PC-3 (cell line): ENCODE measurements at regions of chr5 and their contacts with region 1.

Region 1: GRCh38 chr5:58460732-58461286 is 923 bp upstream of the PLK2 start:
- DNase-seq: peak; percentile 88
- ATAC-seq: peak; percentile 67
- H3K4me3 ChIP-seq: peak overlapping the region; percentile 99
- H3K27ac ChIP-seq: peak overlapping the region; percentile 84
- H3K4me1 ChIP-seq: peaks cover 32% of the 10 kb centered on the region
- H3K27me3 ChIP-seq: no peaks in the 10 kb centered on the region
- CTCF ChIP-seq: peak; percentile 70

Region 2: GRCh38 chr5:57435701-57436134 is 1025.1 kb before region 1 on chr5:
- CTCF ChIA-PET with region 1: no interaction called
- POLR2A ChIA-PET with region 1: no interaction called
- intact Hi-C with region 1: loop called (anchors 2 kb)
- DNase-seq: peak; percentile 93
- ATAC-seq: peak; percentile 92
- H3K4me3 ChIP-seq: no peak overlapping the region
- H3K27ac ChIP-seq: peak overlapping the region; percentile 99
- H3K4me1 ChIP-seq: peaks cover 47% of the 10 kb centered on the region
- H3K27me3 ChIP-seq: no peaks in the 10 kb centered on the region
- CTCF ChIP-seq: no peak

Region 3: DNA sequence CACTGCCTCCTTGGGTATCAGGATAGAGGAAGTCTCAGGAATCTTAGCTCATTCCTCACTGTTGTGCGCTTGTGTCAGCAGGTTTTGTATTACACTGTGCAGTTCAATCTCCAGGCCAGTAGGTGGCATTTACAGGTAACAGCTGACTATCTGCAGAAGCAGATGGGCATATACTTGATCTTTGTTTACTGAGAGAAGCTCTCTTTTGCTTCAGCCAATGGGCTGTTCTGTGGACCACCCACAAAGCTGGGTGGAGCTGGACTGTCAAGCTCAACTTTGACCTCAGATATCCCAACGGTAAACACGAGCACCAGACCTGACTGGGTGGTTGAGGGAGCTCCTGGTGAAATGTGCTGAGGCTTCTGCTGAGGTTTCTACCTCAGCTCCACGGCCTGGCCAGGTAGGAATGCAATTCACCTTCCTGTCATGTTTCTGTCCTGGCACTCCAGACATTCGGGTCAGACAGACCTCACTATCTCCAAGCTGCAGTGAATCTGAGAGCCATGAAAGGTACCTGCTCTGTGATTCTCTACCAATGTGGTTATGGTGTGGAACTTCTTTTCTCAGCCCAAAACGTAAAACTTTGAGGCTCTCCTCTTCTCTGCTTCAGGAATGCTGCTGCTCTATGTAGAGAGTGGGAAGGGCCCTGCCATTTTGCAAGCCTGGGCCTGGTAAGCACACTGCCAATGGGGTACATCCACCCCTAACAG is 810.3 kb before region 1 on chr5:
- CTCF ChIA-PET with region 1: no interaction called
- POLR2A ChIA-PET with region 1: interaction called, 3 read pairs
- intact Hi-C with region 1: loop called (anchors 5 kb)
- DNase-seq: peak; percentile 64
- ATAC-seq: peak; percentile 86
- H3K4me3 ChIP-seq: no peak overlapping the region
- H3K27ac ChIP-seq: no peak overlapping the region
- H3K4me1 ChIP-seq: no peaks in the 10 kb centered on the region
- H3K27me3 ChIP-seq: no peaks in the 10 kb centered on the region
- CTCF ChIP-seq: peak; percentile 71

Region 4: DNA sequence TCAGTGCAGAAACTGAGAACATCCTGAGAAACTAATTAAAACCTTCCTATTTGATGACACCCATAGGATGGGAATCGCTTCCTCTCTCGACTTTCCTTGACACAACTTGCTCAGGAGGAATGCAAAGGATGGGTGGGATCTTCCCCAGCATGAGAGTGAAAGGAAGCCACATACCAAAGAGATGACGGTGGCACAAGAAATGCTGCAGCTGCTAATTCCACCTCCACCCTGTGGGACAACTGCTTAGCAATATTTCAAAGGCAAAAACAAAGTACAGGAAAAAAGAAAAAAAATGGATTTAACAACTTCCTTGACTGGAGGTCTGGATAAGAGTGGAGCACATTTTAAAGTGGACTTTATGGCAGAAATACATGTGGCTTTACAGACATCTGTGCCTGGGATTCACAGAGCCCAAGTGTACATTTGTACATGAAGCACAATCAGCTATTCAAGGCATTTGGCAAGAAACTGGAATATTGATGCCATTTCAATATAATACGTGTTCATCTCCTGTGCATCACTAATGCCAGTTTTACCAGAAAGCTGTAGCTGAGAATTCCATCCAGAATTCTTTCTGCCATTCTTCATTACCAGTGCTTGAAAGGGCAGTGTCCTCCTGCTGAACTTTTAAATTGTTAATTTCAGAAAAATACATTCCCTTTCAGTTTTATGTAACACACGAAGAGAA is 619.0 kb before region 1 on chr5:
- CTCF ChIA-PET with region 1: interaction called, 3 read pairs
- POLR2A ChIA-PET with region 1: interaction called, 4 read pairs
- intact Hi-C with region 1: loop called (anchors 1 kb)
- DNase-seq: peak; percentile 87
- ATAC-seq: peak; percentile 64
- H3K4me3 ChIP-seq: peak overlapping the region; percentile 12; the same call in 1 of the 2 replicates
- H3K27ac ChIP-seq: peak overlapping the region; percentile 81
- H3K4me1 ChIP-seq: peaks cover 57% of the 10 kb centered on the region
- H3K27me3 ChIP-seq: no peaks in the 10 kb centered on the region
- CTCF ChIP-seq: no peak

Region 5: DNA sequence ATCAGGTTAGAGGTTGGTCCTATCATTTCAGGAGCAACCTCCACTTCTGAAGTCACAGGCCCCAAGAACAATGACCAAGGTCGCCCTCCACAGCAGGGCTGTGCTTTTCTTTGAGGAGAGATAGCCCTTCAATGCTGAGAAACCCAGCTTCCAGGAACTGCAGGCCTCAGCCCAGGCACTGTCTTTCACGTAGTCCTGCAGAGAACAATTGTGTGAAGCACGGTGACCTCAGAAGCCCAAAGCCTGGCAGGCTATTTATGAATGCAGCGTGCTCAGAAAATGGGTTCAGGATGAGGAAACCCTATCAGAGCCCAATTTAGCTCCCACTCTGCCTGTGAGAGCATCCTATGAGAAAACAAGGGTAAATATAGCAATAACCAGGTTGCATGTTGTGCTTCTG is 389.2 kb before region 1 on chr5:
- CTCF ChIA-PET with region 1: no interaction called
- POLR2A ChIA-PET with region 1: no interaction called
- intact Hi-C with region 1: loop called (anchors 5 kb)
- DNase-seq: no peak
- ATAC-seq: no peak
- H3K4me3 ChIP-seq: no peak overlapping the region
- H3K27ac ChIP-seq: no peak overlapping the region
- H3K4me1 ChIP-seq: peaks cover 33% of the 10 kb centered on the region
- H3K27me3 ChIP-seq: no peaks in the 10 kb centered on the region
- CTCF ChIP-seq: no peak

Region 6: DNA sequence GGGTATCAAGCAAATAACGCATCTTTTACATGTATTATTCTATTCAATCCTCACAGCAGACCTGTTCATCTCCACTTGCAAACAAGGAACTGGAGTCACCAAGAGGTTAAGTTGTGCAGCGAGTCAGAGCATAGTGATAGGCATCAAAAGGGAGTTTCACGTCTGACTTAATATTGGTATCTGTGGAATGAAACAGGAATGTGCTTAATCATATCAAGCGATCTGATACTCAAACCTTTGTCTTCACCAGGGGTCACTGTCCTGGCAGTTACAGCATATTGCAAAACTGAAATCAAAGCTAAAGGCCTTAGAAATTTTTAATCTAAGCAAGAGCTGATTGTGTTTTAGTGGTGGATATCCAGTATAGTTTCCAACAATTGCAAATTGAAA is 272.6 kb before region 1 on chr5:
- CTCF ChIA-PET with region 1: interaction called, 3 read pairs
- POLR2A ChIA-PET with region 1: interaction called, 4 read pairs
- intact Hi-C with region 1: loop called (anchors 2 kb)
- DNase-seq: peak; percentile 84
- ATAC-seq: peak; percentile 63
- H3K4me3 ChIP-seq: 0 out of 2 replicates have a peak overlapping the region, but pooled peaks have one; percentile 0
- H3K27ac ChIP-seq: peak overlapping the region; percentile 64
- H3K4me1 ChIP-seq: peaks cover 84% of the 10 kb centered on the region
- H3K27me3 ChIP-seq: no peaks in the 10 kb centered on the region
- CTCF ChIP-seq: peak; percentile 26; the same call in 1 of the 2 replicates